IMR-90 (cell line): ENCODE measurements at regions of chr20 and their contacts with region 1.

Region 1: GRCh38 chr20:62182613-62183425 is at the start of gene MTG2:
- DNase-seq: peak; percentile 95
- ATAC-seq: peak; percentile 94
- H3K4me3 ChIP-seq: peak within 1 kb of the TSS; percentile 94
- H3K27ac ChIP-seq: peak within 1 kb of the TSS; percentile 97
- H3K4me1 ChIP-seq: peaks cover 7% of the 10 kb centered on the region
- H3K27me3 ChIP-seq: no peaks in the 10 kb centered on the region
- CTCF ChIP-seq: no peak
- POLR2A ChIP-seq: peak; percentile 86
- RAD21 ChIP-seq: 0 out of 2 replicates have a peak, but pooled peaks have one; percentile 9
- total RNA-seq, gene MTG2: 11.5 and 12.2 TPM in 2 replicates

Region 2: DNA sequence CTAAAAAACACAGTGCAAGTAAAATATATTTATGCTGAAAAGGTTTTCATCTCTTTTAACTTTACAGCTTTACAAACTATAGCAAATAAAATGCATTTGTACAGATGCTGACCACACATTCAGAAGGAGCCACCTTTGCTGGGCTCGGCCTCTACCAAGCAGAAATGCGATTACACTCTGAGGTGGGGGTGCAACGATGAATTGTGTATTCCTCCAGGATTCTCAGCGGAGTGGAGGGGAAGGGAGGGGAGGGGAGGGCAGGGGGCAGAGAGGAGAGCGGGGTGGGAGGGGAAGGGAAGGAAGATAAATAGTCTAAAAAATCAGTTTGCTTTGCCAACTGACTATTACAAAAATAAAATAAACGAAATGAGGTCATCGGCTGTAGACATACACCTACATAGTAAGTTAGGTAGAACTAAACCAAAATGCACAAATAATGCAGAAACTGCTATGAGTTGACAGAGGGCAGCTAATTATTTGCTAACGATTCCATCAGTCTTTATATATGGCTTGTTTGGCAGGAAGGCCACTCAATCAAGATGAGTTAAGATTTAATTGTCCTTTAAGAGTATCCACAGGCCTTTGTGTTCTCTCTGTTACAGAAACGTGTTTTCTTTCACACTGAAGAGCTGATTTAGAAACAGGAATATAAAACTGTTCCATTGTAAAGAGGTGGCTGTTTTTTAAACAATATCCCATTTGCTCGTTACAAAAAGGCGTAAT is 207.3 kb before region 1 on chr20:
- CTCF ChIA-PET with region 1: no interaction called
- POLR2A ChIA-PET with region 1: interaction called, 14 read pairs
- dilution Hi-C with region 1: no loop called
- in situ Hi-C with region 1: no loop called
- intact Hi-C with region 1: no loop called
- DNase-seq: no peak
- ATAC-seq: no peak
- H3K4me3 ChIP-seq: no peak overlapping the region
- H3K27ac ChIP-seq: no peak overlapping the region
- H3K4me1 ChIP-seq: no peaks in the 10 kb centered on the region
- H3K27me3 ChIP-seq: no peaks in the 10 kb centered on the region
- CTCF ChIP-seq: no peak
- POLR2A ChIP-seq: no peak
- RAD21 ChIP-seq: no peak

Region 3: DNA sequence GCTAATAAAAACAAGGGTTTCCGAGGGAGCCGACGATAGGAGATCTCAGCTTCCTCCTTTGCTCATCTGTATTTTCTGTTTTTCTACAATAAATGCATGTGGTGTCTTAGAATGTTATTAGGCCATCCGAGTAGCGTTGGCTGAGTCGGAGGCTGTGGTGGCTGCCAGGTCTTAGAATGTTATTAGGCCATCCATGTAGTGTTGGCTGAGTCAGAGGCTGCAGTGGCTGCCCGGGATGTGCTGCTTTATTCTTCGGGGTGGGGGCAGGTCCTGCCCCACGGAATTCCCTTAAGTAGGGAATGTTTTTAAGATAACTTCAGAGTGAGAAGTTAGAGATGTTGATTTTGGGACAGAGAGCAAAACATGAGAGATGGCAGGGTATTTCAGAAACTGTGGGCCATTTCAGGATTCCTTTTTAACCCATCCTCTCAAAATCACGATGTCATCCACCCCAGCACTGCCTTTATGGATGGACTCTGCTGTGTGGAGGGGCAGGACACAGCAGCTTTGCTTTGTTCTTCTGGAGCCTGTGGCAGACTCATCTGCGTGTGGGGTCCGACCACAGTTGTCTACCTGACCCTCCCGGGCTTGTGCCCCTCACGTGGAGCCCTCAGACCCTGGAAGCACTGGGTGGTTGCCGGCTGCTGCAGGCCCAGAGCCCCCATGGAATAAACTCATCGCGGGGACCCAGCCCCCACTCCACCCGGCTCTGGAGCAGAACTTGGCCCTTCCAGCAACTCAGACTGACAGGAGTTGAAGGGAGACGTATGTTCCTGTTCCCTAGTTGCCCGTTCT is 75.9 kb after region 1 on chr20:
- CTCF ChIA-PET with region 1: no interaction called
- POLR2A ChIA-PET with region 1: no interaction called
- dilution Hi-C with region 1: no loop called
- in situ Hi-C with region 1: no loop called
- intact Hi-C with region 1: loop called (anchors 10 kb)
- DNase-seq: peak; percentile 85
- ATAC-seq: peak; percentile 99
- H3K4me3 ChIP-seq: no peak overlapping the region
- H3K27ac ChIP-seq: no peak overlapping the region
- H3K4me1 ChIP-seq: peaks cover 8% of the 10 kb centered on the region; the same call in 1 of the 2 replicates
- H3K27me3 ChIP-seq: no peaks in the 10 kb centered on the region
- CTCF ChIP-seq: no peak
- POLR2A ChIP-seq: no peak
- RAD21 ChIP-seq: no peak